ENCODE measurements at regions of chr7 and their contacts with region 1.

Region 1: GRCh38 chr7:137606061-137606674 is 240.6 kb downstream of the DGKI start:
- DNase-seq: no peak
- H3K4me3 Mint-ChIP-seq: no peak overlapping the region
- H3K27ac Mint-ChIP-seq: no peak overlapping the region
- H3K4me1 Mint-ChIP-seq: no peaks in the 10 kb centered on the region
- H3K27me3 Mint-ChIP-seq: peaks cover 4% of the 10 kb centered on the region

Region 2: DNA sequence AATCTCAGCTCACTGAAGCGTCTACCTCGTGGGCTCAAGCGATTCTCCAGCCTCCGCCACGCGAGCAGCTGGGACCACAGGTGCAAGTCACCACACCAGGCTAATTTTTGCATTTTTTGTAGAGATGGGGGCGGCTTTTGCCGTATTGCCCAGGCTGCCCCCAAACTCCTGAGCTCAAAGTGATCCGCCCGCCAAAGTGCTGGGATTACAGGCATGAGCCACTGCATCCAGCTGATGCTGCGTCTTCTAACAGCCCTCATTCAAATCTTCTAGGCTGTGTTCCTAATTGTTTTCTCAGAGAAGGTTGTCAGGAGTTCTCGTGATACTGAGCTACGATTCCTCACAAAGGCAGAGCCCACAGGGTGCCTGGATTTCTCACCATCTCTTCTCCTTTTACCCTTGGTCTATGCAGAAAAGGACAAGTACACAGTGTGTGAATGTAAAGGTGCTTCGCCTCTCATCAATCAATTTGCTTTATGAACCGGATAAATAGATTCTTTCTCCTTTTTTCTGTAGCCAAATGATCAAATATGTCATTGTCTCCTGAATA is 15.3 kb before region 1 on chr7:
- intact Hi-C with region 1: no loop called
- DNase-seq: no peak
- H3K4me3 Mint-ChIP-seq: no peak overlapping the region
- H3K27ac Mint-ChIP-seq: no peak overlapping the region
- H3K4me1 Mint-ChIP-seq: no peaks in the 10 kb centered on the region
- H3K27me3 Mint-ChIP-seq: peaks cover 3% of the 10 kb centered on the region

Region 3: GRCh38 chr7:137626469-137627067 is 20.4 kb after region 1 on chr7:
- intact Hi-C with region 1: loop called (anchors 1 kb)
- DNase-seq: peak; percentile 9
- H3K4me3 Mint-ChIP-seq: no peak overlapping the region
- H3K27ac Mint-ChIP-seq: peak overlapping the region; percentile 4
- H3K4me1 Mint-ChIP-seq: no peaks in the 10 kb centered on the region
- H3K27me3 Mint-ChIP-seq: peaks cover 4% of the 10 kb centered on the region